CD8-positive, alpha-beta T cell (primary cell): ENCODE measurements at regions of chr20 and their contacts with region 1.

Region 1: DNA sequence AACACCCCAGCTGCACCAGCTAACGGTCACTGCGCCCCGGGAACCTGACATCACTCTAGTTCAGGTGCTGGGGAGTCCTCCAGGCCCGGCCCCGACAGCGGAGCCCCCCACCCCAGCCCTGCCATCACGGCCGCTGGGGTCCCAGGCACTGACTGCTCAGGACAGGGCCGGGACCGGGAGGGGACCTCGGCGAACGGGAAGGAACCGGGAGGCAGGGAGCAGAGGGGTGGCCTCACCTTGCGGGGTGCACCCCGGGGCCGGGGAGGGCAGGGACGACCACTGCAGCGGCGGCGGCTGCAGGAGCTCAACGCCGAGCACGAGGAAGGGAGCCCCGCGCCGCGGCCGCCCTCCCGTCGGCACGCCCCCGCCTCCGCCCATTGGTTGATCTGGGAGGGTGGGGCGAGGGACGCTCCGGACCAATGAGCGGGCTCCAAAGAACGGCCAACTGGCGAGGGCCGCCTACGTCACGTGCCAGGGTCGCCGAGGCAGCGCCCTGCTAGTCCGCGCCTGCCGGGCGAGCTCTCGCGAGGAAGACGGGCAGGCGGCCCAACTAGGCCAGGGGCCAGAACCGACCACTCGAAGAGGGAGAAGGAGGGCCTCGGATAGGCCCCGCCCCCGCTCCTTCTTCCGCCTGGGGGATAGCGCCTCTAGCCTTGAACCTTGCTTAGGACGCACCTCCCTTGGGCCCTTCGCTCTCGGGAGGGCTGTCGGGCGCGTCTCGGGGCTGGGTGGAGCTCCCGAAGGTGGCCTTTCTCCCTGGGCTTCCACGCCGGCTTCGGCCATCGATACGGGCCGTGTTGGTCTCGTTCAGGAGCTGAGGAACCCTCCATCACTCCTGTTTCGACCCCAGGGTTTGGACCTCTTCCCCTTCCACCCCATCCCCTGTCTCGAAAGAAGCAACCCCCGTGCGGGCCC is at the start of gene ADISSP:
- DNase-seq: peak; percentile 92 to 98 (median 95)
- ATAC-seq: peak; percentile 80
- H3K4me3 ChIP-seq: peak within 1 kb of the TSS; percentile 91 to 99
- H3K4me3 Mint-ChIP-seq: peak within 1 kb of the TSS; percentile 90
- H3K27ac ChIP-seq: peak within 1 kb of the TSS; percentile 99 to 100
- H3K27ac Mint-ChIP-seq: peak within 1 kb of the TSS; percentile 96
- H3K4me1 ChIP-seq: peaks cover 17% of the 10 kb centered on the region
- H3K4me1 Mint-ChIP-seq: peaks cover 26% of the 10 kb centered on the region
- H3K27me3 ChIP-seq: no peaks in the 10 kb centered on the region
- H3K27me3 Mint-ChIP-seq: peaks cover 4% of the 10 kb centered on the region
- CTCF ChIP-seq: no peak
- total RNA-seq, gene ADISSP: 9.6 to 10.7 TPM

Region 2: GRCh38 chr20:3679749-3680700 is 87.7 kb before region 1 on chr20:
- CTCF ChIA-PET with region 1: no interaction called
- POLR2A ChIA-PET with region 1: no interaction called
- intact Hi-C with region 1: loop called (anchors 1 to 2 kb)
- DNase-seq: no peak
- ATAC-seq: no peak
- H3K4me3 ChIP-seq: no peak overlapping the region
- H3K4me3 Mint-ChIP-seq: no peak overlapping the region
- H3K27ac ChIP-seq: no peak overlapping the region
- H3K27ac Mint-ChIP-seq: no peak overlapping the region
- H3K4me1 ChIP-seq: peaks cover 4% of the 10 kb centered on the region
- H3K4me1 Mint-ChIP-seq: peaks cover 10% of the 10 kb centered on the region
- H3K27me3 ChIP-seq: peaks cover 0 to 10% of the 10 kb centered on the region in 2 experiments
- H3K27me3 Mint-ChIP-seq: peaks cover 45% of the 10 kb centered on the region
- CTCF ChIP-seq: no peak

Region 3: GRCh38 chr20:3786665-3787323 is 19.1 kb after region 1 on chr20 and contains the start of gene CENPB:
- CTCF ChIA-PET with region 1: interaction called, 18 read pairs
- POLR2A ChIA-PET with region 1: interaction called, 25 read pairs
- intact Hi-C with region 1: loop called (anchors 1 kb)
- DNase-seq: peak; percentile 83 to 95 (median 90)
- ATAC-seq: peak; percentile 87
- H3K4me3 ChIP-seq: peak within 1 kb of the TSS; percentile 46 to 55
- H3K4me3 Mint-ChIP-seq: peak within 1 kb of the TSS; percentile 84
- H3K27ac ChIP-seq: peak within 1 kb of the TSS; percentile 37 to 75
- H3K27ac Mint-ChIP-seq: peak within 1 kb of the TSS; percentile 91
- H3K4me1 ChIP-seq: peaks cover 24% of the 10 kb centered on the region
- H3K4me1 Mint-ChIP-seq: peaks cover 30% of the 10 kb centered on the region
- H3K27me3 ChIP-seq: no peaks in the 10 kb centered on the region
- H3K27me3 Mint-ChIP-seq: no peaks in the 10 kb centered on the region
- CTCF ChIP-seq: peak; percentile 86
- total RNA-seq, gene CENPB: 23.2 to 24.1 TPM

Region 4: GRCh38 chr20:3820048-3820900 is 52.6 kb after region 1 on chr20 and contains the start of gene AP5S1:
- CTCF ChIA-PET with region 1: interaction called, 16 read pairs
- POLR2A ChIA-PET with region 1: interaction called, 19 read pairs
- intact Hi-C with region 1: loop called (anchors 1 kb)
- DNase-seq: peak; percentile 81 to 96 (median 89)
- ATAC-seq: peak; percentile 85
- H3K4me3 ChIP-seq: peak within 1 kb of the TSS; percentile 60 to 64
- H3K4me3 Mint-ChIP-seq: peak within 1 kb of the TSS; percentile 92
- H3K27ac ChIP-seq: peak within 1 kb of the TSS; percentile 92 to 97
- H3K27ac Mint-ChIP-seq: peak within 1 kb of the TSS; percentile 98
- H3K4me1 ChIP-seq: peaks cover 51% of the 10 kb centered on the region
- H3K4me1 Mint-ChIP-seq: peaks cover 51% of the 10 kb centered on the region
- H3K27me3 ChIP-seq: no peaks in the 10 kb centered on the region
- H3K27me3 Mint-ChIP-seq: no peaks in the 10 kb centered on the region
- CTCF ChIP-seq: peak; percentile 94
- total RNA-seq, gene AP5S1: 5.2 to 6.3 TPM

Region 5: GRCh38 chr20:3888622-3889488 is 121.2 kb after region 1 on chr20 and contains the start of gene PANK2:
- CTCF ChIA-PET with region 1: no interaction called
- POLR2A ChIA-PET with region 1: interaction called, 3 read pairs
- intact Hi-C with region 1: loop called in 1 of 2 experiments (anchors 1 kb)
- DNase-seq: peak; percentile 95 to 99 (median 97)
- ATAC-seq: peak; percentile 95
- H3K4me3 ChIP-seq: peak within 1 kb of the TSS; percentile 83 to 97
- H3K4me3 Mint-ChIP-seq: peak within 1 kb of the TSS; percentile 97
- H3K27ac ChIP-seq: peak within 1 kb of the TSS; percentile 72 to 81
- H3K27ac Mint-ChIP-seq: peak within 1 kb of the TSS; percentile 96
- H3K4me1 ChIP-seq: peaks cover 37% of the 10 kb centered on the region
- H3K4me1 Mint-ChIP-seq: peaks cover 57% of the 10 kb centered on the region
- H3K27me3 ChIP-seq: no peaks in the 10 kb centered on the region
- H3K27me3 Mint-ChIP-seq: no peaks in the 10 kb centered on the region
- CTCF ChIP-seq: no peak
- total RNA-seq, gene PANK2: 44.2 to 53.5 TPM